ENCODE measurements at regions of chr2 and their contacts with region 1.

Region 1: DNA sequence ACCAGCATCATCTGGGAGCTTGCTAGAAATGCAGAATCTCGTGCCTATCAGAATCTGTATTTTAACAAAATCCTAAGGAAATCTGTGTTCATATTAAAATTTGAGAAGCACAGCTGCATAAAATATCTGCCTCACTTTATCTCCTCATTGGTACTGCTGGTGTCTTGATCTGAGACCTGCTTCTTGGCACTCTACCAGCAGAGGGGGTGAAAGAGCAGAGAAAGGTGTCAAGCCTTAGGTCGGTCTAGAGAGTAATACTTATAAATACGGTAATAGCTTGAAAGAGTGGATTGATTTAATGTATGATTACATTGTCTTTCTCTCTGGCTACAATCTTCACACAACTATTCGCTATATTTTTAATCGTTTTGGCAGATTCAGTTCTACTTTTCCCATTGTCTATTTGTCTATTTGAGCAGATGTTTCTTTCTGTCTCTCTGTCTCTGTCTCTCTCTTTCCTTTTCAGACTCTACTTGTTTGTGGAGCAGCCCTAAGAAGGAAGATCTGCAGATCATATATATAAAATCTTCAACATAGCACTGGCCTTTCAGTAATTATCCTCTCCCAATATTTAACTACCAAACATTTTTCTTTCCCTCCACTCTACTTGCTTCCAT is 1.7 kb upstream of the GCG start:
- DNase-seq: no peak
- H3K4me3 ChIP-seq: no peak overlapping the region
- H3K27ac ChIP-seq: no peak overlapping the region
- H3K27me3 ChIP-seq: no peaks in the 10 kb centered on the region
- CTCF ChIP-seq: peak; percentile 71

Region 2: GRCh38 chr2:162050513-162050961 is 103.2 kb before region 1 on chr2:
- CTCF ChIA-PET with region 1: no interaction called
- POLR2A ChIA-PET with region 1: no interaction called
- DNase-seq: no peak
- H3K4me3 ChIP-seq: no peak overlapping the region
- H3K27ac ChIP-seq: no peak overlapping the region
- H3K27me3 ChIP-seq: no peaks in the 10 kb centered on the region
- CTCF ChIP-seq: no peak

Region 3: GRCh38 chr2:162062559-162062958 is 91.2 kb before region 1 on chr2:
- CTCF ChIA-PET with region 1: no interaction called
- POLR2A ChIA-PET with region 1: no interaction called
- DNase-seq: no peak
- H3K4me3 ChIP-seq: no peak overlapping the region
- H3K27ac ChIP-seq: no peak overlapping the region
- H3K27me3 ChIP-seq: no peaks in the 10 kb centered on the region
- CTCF ChIP-seq: no peak

Region 4: DNA sequence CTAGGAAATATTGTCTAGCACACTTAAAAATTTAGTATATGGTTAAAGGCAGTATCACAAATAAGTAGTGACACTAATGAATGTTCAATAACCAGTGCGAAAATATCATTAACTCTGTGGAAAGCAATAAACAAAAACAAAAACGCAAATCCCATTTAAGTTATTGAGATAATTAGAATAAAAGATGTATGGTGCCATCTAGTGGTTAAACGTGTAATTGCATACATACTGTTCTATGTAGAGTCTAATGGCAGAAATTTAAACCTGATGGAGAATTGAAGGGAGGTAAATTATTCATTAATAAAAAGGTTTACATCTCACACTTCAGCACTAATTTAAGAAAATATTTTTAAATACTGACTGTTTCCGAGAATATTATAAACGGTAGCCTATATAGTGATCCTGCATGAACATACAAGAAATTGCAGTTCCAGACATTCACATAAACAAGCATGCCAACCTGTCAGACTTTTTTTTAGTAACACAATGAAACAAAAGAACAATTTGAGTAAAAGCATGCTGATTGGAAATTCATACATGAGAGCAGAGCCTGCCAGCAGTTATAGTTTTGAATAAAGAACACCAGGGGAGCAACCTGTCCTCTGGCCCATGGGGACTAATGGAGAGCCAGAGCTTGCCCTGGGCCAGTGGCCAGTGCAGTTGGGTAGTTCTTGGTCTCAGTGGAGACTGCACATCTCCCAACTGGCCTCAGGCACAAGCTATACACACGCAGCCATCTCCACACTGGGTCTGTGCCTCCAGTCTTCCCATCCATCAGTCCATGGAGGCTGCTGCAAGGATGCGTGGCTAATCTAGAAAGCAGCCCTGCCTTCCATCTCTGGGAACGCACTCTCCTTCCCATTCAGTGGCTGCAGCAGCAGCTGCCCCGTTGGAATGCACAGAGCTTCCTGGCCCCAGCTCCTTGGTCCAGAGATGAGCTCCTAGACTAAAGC is 29.6 kb before region 1 on chr2:
- CTCF ChIA-PET with region 1: interaction called, 11 read pairs
- POLR2A ChIA-PET with region 1: no interaction called
- DNase-seq: no peak
- H3K4me3 ChIP-seq: no peak overlapping the region
- H3K27ac ChIP-seq: no peak overlapping the region
- H3K27me3 ChIP-seq: no peaks in the 10 kb centered on the region
- CTCF ChIP-seq: peak; percentile 60

Region 5: GRCh38 chr2:162166174-162166573 is 12.5 kb after region 1 on chr2:
- CTCF ChIA-PET with region 1: interaction called, 18 read pairs
- POLR2A ChIA-PET with region 1: no interaction called
- DNase-seq: no peak
- H3K4me3 ChIP-seq: no peak overlapping the region
- H3K27ac ChIP-seq: no peak overlapping the region
- H3K27me3 ChIP-seq: no peaks in the 10 kb centered on the region
- CTCF ChIP-seq: no peak

Region 6: DNA sequence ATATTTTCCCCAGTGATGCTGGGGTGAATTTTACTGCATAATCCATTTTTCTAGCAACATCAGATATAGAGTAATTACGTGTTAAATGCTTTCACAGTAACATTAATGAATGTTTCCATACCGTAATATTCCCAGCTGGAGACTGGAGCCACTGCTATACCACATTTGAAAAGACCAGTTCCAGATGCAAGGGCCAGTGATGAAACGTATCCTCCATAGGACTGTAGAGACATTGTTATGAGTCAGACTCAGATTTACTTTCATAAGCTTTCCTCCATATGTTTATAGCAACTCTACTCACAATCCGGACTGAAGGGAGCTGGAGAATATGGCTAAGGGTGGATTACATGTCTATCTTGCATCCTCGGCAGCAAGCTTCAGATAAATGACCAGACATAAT is 21.0 kb after region 1 on chr2:
- CTCF ChIA-PET with region 1: interaction called, 17 read pairs
- POLR2A ChIA-PET with region 1: no interaction called
- DNase-seq: peak; percentile 29
- H3K4me3 ChIP-seq: no peak overlapping the region
- H3K27ac ChIP-seq: peak overlapping the region; percentile 33
- H3K27me3 ChIP-seq: no peaks in the 10 kb centered on the region
- CTCF ChIP-seq: no peak

Region 7: DNA sequence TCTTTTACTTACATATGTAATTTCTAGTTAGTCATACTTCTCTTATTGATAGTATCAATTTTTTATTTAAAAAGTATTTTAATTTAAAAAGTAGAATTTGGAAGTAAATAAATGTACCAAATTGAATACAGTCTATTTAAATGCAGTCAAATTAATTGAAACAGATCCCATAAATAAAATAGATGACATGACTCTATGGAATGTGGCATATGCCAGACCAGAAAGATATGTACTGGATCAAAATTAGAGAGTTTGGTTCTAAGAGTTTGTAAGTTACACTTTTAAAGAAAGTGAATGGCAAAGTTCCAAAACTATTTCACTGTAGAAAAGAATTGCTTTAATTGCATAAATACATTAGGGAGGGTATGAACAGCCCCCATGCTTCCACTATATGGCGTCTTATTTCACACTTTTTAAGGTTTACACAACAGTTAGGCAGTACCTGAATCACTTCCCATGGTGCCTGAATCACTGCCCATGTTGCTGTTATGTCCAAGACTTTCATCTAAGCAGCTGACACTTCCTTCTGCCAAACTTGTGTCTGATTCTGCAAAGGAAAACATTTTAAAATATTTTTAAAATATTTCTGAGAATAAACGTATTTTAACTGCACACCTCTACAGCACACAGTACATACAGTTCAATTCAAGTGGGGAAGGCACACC is 139.5 kb after region 1 on chr2:
- CTCF ChIA-PET with region 1: interaction called, 344 read pairs
- POLR2A ChIA-PET with region 1: no interaction called
- DNase-seq: no peak
- H3K4me3 ChIP-seq: no peak overlapping the region
- H3K27ac ChIP-seq: no peak overlapping the region
- H3K27me3 ChIP-seq: no peaks in the 10 kb centered on the region
- CTCF ChIP-seq: no peak

Measured in AG04450 (cell line).